Activated T-helper 1 cell treated with anti-CD3 and anti-CD28 coated beads, Interleukin-12 subunit alpha, Interleukin-12 subunit beta, Interleukin-2, Interleukin-4 antibody, amounts not matched to agents 30 ng/mL and 10 ng/mL and 1 ng/mL, durations not matched to agents 14 hours and 24 hours and 36 hours (primary cell): ENCODE measurements at regions of chr13 and their contacts with region 1.

Region 1: GRCh38 chr13:98549728-98550317 is 27.1 kb downstream of the STK24 start:
- DNase-seq: no peak
- H3K4me3 Mint-ChIP-seq: peak overlapping the region; percentile 38
- H3K27ac Mint-ChIP-seq: peak overlapping the region; percentile 67
- H3K4me1 Mint-ChIP-seq: peaks cover 73% of the 10 kb centered on the region
- H3K27me3 Mint-ChIP-seq: no peaks in the 10 kb centered on the region

Region 2: DNA sequence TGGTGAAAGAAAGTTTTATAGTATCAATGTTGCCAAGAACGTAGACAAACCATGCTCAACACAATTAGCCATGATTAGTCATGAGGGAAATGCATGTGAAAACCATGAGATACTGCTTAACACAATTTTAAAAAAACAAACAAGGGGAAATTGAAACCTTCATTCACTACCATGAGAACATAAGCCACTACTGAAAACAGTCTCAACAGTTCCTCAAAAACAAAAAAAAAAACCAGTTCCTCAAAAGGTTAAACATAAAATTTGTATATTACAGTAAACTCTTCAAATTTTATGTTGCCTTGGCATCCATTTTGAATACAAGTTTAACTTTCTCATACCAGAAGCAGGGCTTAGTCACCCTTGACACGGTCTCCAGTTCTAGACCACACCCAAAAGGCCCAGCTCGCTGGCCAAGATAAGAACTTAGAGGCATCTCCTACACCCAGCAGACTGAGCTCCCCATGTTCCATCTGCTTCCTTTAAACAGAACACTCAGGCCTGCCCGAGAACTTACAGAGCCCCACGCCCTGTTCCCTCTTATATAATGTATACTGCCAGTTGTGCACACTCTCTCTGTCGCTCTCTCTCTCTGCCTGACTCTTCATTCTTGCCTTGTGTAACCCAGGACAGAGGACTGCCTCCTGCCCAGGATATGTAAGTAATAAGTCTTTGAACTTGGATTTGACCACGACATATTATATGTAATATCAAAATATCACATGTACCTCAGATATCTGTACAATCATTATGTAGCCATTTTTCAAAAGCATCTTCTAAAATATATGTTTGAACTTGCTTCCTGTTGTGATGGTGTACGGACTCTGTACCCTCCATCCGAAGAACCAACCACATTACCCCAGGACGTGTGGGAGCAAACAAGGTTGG is 40.3 kb before region 1 on chr13:
- intact Hi-C with region 1: loop called (anchors 2 kb)
- DNase-seq: peak; percentile 31
- H3K4me3 Mint-ChIP-seq: peak overlapping the region; percentile 13
- H3K27ac Mint-ChIP-seq: peak overlapping the region; percentile 65
- H3K4me1 Mint-ChIP-seq: peaks cover 80% of the 10 kb centered on the region
- H3K27me3 Mint-ChIP-seq: no peaks in the 10 kb centered on the region

Region 3: GRCh38 chr13:98528663-98529570 is 20.9 kb before region 1 on chr13:
- intact Hi-C with region 1: loop called (anchors 1 kb)
- DNase-seq: no peak
- H3K4me3 Mint-ChIP-seq: peak overlapping the region; percentile 47
- H3K27ac Mint-ChIP-seq: peak overlapping the region; percentile 91
- H3K4me1 Mint-ChIP-seq: peaks cover 81% of the 10 kb centered on the region
- H3K27me3 Mint-ChIP-seq: no peaks in the 10 kb centered on the region

Region 4: DNA sequence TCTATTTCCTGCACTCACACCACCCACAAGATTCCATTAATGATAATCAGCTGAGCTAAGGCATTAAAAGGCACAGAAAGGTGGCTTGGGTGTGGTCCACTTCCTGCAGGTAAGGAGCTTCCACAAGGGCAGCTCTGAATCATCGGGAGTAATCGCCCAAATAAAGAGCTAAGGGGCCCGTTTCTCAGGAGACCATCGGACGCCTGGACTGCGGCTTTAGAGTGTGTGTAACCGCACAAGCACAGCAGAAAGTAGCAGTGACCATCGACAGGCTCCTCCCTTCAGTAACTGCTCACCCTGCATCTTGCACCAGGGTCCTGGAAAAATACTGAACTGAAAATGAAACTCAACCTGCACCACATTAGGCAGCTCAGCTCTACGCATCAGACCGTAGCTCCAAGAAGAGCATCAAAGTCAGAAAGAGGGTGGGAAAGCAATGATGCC is 21.1 kb after region 1 on chr13:
- intact Hi-C with region 1: loop called (anchors 1 kb)
- DNase-seq: peak; percentile 51
- H3K4me3 Mint-ChIP-seq: peak overlapping the region; percentile 81
- H3K27ac Mint-ChIP-seq: peak overlapping the region; percentile 91
- H3K4me1 Mint-ChIP-seq: peaks cover 98% of the 10 kb centered on the region
- H3K27me3 Mint-ChIP-seq: no peaks in the 10 kb centered on the region